ENCODE measurements at regions of chr6 and their contacts with region 1.

Region 1: GRCh38 chr6:168884646-168885086 is 369.0 kb downstream of the THBS2 start:
- DNase-seq: peak; percentile 36 to 96 (median 75)

Region 2: GRCh38 chr6:168616816-168617765 is 267.6 kb before region 1 on chr6:
- intact Hi-C with region 1: loop called (anchors 1 kb)
- DNase-seq: peak in 3 of 10 donors; percentile 35 to 81 (median 54)

Region 3: DNA sequence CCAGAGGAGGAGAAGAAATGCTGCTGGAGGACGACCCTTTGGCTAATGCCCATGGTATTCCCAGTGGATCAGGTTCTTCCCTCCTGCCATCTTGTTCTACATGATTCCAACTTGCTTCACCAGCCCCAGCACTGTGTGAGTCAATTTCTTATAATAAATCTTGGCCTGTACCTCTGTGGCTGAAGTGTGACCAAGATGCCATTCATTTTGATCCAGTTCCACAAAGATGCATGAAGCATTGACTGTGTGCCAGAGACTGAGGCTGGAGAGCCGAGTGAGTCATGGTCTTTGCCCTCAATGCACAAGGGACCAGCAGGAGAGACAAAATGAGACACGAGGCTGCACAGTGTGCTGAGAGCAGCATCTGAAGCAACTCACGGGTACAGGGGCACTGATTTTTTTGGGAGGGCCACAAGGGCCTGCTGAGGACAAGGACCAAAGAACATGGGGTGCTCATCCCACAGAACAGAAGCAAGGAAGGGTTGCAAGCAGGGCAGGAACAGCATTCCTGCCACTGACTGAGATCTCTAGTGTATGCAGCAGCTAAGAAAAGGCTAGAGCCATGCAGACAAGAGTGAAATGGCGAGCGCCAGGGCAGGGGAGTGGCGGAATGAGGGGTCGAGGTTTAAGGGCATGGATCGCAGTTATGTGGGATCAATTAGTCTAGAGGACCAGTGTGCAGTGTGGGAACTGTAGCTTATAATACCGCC is 162.0 kb after region 1 on chr6:
- intact Hi-C with region 1: no loop called
- DNase-seq: no peak